ENCODE measurements at regions of chr12 and their contacts with region 1.

Region 1: GRCh38 chr12:25052196-25052913 is 103.5 kb upstream of the BCAT1 start:
- DNase-seq: peak in 8 of 9 donors; percentile 51 to 92 (median 87)
- ATAC-seq: peak; percentile 85
- H3K4me3 ChIP-seq: peak overlapping the region; percentile 94
- H3K4me3 Mint-ChIP-seq: peak overlapping the region; percentile 88 to 100 (median 95)
- H3K27ac ChIP-seq: peak overlapping the region; percentile 76
- H3K27ac Mint-ChIP-seq: peak overlapping the region; percentile 92 to 100 (median 99)
- H3K4me1 ChIP-seq: peaks cover 22 to 25% of the 10 kb centered on the region in 2 donors
- H3K4me1 Mint-ChIP-seq: peaks cover 29 to 50% (median 42%) of the 10 kb centered on the region in 7 donors
- H3K27me3 ChIP-seq: no peaks in the 10 kb centered on the region
- H3K27me3 Mint-ChIP-seq: peaks cover 0 to 3% (median 0%) of the 10 kb centered on the region in 5 donors

Region 2: DNA sequence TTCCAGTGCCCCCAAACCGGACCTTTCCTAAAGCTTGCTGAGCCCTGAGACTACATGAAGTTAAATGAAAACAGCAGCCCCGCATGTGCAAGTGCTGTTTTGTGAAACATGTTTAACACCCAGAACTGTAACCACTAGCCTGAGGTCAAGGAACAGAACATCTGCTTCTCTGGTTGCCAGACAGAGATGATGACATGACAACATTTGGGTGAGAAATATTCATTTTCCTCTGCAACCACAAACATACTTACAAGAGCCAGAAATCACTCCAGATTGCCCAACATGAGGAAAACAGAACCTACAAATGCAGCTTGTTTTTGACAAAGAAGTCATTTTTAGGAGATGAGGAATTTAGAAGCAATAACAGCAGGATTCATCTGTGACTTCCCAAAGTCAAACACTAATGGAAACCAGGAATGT is 213.8 kb before region 1 on chr12:
- CTCF ChIA-PET with region 1: no interaction called
- POLR2A ChIA-PET with region 1: no interaction called
- intact Hi-C with region 1: loop called in 1 of 2 experiments (anchors 2 kb)
- DNase-seq: peak in 1 of 9 donors; percentile 28
- ATAC-seq: peak; percentile 61
- H3K4me3 ChIP-seq: no peak overlapping the region
- H3K4me3 Mint-ChIP-seq: peak overlapping the region in 1 of 10 donors; percentile 61
- H3K27ac ChIP-seq: no peak overlapping the region
- H3K27ac Mint-ChIP-seq: peak overlapping the region in 1 of 9 donors; percentile 46
- H3K4me1 ChIP-seq: no peaks in the 10 kb centered on the region
- H3K4me1 Mint-ChIP-seq: peaks cover 0 to 33% (median 0%) of the 10 kb centered on the region in 7 donors
- H3K27me3 ChIP-seq: no peaks in the 10 kb centered on the region
- H3K27me3 Mint-ChIP-seq: peaks cover 0 to 22% (median 15%) of the 10 kb centered on the region in 5 donors

Region 3: DNA sequence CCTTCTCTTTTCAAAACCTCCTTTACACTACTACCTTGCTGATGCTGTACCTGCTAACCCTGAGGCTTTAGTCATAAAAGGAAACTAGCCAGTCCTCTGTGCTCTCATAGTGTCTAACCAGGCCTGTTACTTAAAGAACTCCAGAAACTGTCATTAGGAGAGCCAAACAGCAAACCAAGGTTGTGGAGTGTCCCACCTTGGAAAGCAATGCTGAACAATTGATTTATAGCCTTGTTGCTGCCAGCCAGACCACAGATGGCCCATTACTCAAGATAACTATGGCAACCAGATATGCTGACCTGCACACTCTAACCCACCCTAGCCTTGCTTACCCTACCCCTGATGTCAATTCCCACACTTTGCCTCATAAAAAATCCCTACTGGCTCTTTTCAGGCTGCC is 76.9 kb before region 1 on chr12:
- CTCF ChIA-PET with region 1: no interaction called
- POLR2A ChIA-PET with region 1: no interaction called
- intact Hi-C with region 1: no loop called
- DNase-seq: no peak
- ATAC-seq: no peak
- H3K4me3 ChIP-seq: no peak overlapping the region
- H3K4me3 Mint-ChIP-seq: no peak overlapping the region
- H3K27ac ChIP-seq: no peak overlapping the region
- H3K27ac Mint-ChIP-seq: no peak overlapping the region
- H3K4me1 ChIP-seq: no peaks in the 10 kb centered on the region
- H3K4me1 Mint-ChIP-seq: peaks cover 0 to 3% (median 0%) of the 10 kb centered on the region in 7 donors
- H3K27me3 ChIP-seq: no peaks in the 10 kb centered on the region
- H3K27me3 Mint-ChIP-seq: peaks cover 2 to 11% (median 9%) of the 10 kb centered on the region in 5 donors

Region 4: GRCh38 chr12:24997970-24998582 is 54.3 kb before region 1 on chr12:
- CTCF ChIA-PET with region 1: no interaction called
- POLR2A ChIA-PET with region 1: interaction called, 5 read pairs
- intact Hi-C with region 1: loop called (anchors 1 to 2 kb)
- DNase-seq: no peak
- ATAC-seq: peak; percentile 54
- H3K4me3 ChIP-seq: no peak overlapping the region
- H3K4me3 Mint-ChIP-seq: no peak overlapping the region
- H3K27ac ChIP-seq: no peak overlapping the region
- H3K27ac Mint-ChIP-seq: peak overlapping the region in 1 of 9 donors; percentile 24
- H3K4me1 ChIP-seq: peaks cover 0 to 11% of the 10 kb centered on the region in 2 donors
- H3K4me1 Mint-ChIP-seq: peaks cover 0 to 16% (median 9%) of the 10 kb centered on the region in 7 donors
- H3K27me3 ChIP-seq: no peaks in the 10 kb centered on the region
- H3K27me3 Mint-ChIP-seq: peaks cover 0 to 18% (median 0%) of the 10 kb centered on the region in 5 donors

Region 5: GRCh38 chr12:25079393-25079792 is 27.0 kb after region 1 on chr12:
- CTCF ChIA-PET with region 1: no interaction called
- POLR2A ChIA-PET with region 1: no interaction called
- intact Hi-C with region 1: loop called in 1 of 2 experiments (anchors 2 kb)
- DNase-seq: no peak
- ATAC-seq: no peak
- H3K4me3 ChIP-seq: no peak overlapping the region
- H3K4me3 Mint-ChIP-seq: no peak overlapping the region
- H3K27ac ChIP-seq: no peak overlapping the region
- H3K27ac Mint-ChIP-seq: no peak overlapping the region
- H3K4me1 ChIP-seq: no peaks in the 10 kb centered on the region
- H3K4me1 Mint-ChIP-seq: peaks cover 0 to 9% (median 7%) of the 10 kb centered on the region in 7 donors
- H3K27me3 ChIP-seq: no peaks in the 10 kb centered on the region
- H3K27me3 Mint-ChIP-seq: no peaks in the 10 kb centered on the region

Region 6: DNA sequence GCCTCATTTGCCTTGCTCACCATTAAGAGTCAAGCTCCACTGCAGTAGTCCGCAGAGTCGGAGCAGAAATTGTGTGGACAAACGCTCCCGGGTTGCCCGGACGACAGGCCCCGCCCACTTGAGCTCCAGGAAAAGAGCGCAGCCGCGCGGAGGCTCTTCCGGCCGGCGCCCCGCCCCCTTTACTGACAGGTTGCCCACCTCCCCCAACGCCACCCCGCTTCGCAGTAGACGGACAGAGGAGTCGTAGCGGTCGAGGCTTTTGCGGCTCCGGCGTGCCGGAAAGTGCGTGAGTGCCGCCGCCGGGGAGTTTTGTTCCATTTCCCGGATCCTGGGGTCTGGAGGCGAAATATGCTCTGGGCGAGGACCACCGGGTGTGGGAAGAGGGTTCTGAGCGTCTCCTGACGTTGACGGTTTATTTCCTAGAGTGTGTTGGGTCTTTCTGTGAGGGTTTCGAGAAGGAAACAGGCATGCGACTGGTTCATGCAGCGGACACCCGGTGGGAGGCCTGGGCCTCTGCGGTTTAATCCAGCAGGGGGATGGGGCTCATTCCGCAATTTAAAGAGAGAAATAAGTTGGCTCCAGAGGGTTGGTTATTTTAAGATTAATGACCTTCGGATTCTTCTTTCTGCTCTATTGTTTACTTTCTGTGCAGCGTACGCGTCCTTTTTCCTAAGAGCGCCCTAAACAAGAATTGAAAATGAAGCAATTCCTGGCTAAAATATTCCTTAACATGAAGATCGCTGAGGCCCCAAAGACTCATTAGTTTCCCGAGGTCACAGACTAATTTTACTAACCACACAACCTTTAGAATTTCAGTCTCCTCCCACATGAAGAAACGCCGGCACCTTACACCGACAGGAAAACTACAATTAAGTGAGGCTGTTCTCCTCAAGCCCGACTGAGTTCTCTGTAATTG is 143.0 kb after region 1 on chr12 and contains the starts of genes DNAI7 and ETFRF1:
- CTCF ChIA-PET with region 1: no interaction called
- POLR2A ChIA-PET with region 1: interaction called, 5 read pairs
- intact Hi-C with region 1: loop called (anchors 1 kb)
- DNase-seq: peak; percentile 93 to 98 (median 96)
- ATAC-seq: peak; percentile 99
- H3K4me3 ChIP-seq: peak within 1 kb of the TSS; percentile 90
- H3K4me3 Mint-ChIP-seq: peak within 1 kb of the TSS; percentile 89 to 100 (median 99)
- H3K27ac ChIP-seq: peak within 1 kb of the TSS; percentile 92
- H3K27ac Mint-ChIP-seq: peak within 1 kb of the TSS; percentile 97 to 100 (median 99)
- H3K4me1 ChIP-seq: peaks cover 7 to 8% of the 10 kb centered on the region in 2 donors
- H3K4me1 Mint-ChIP-seq: peaks cover 14 to 59% (median 47%) of the 10 kb centered on the region in 7 donors
- H3K27me3 ChIP-seq: no peaks in the 10 kb centered on the region
- H3K27me3 Mint-ChIP-seq: peaks cover 0 to 3% (median 0%) of the 10 kb centered on the region in 5 donors
- total RNA-seq, gene DNAI7: 0.34 to 0.72 (median 0.50) TPM in 4 of 5 experiments, not detected in the other
- total RNA-seq, gene ETFRF1: 12.9 to 39.5 (median 34.4) TPM

Region 7: GRCh38 chr12:26832822-26833742 is 1780.7 kb after region 1 on chr12 and contains the start of gene ITPR2:
- CTCF ChIA-PET with region 1: no interaction called
- POLR2A ChIA-PET with region 1: no interaction called
- intact Hi-C with region 1: loop called in 1 of 2 experiments (anchors 5 kb)
- DNase-seq: peak; percentile 81 to 94 (median 89)
- ATAC-seq: peak; percentile 96
- H3K4me3 ChIP-seq: peak within 1 kb of the TSS; percentile 96
- H3K4me3 Mint-ChIP-seq: peak within 1 kb of the TSS; percentile 92 to 100 (median 98)
- H3K27ac ChIP-seq: peak within 1 kb of the TSS; percentile 92
- H3K27ac Mint-ChIP-seq: peak within 1 kb of the TSS; percentile 95 to 99 (median 98)
- H3K4me1 ChIP-seq: peaks cover 12 to 16% of the 10 kb centered on the region in 2 donors
- H3K4me1 Mint-ChIP-seq: peaks cover 26 to 51% (median 45%) of the 10 kb centered on the region in 7 donors
- H3K27me3 ChIP-seq: no peaks in the 10 kb centered on the region
- H3K27me3 Mint-ChIP-seq: no peaks in the 10 kb centered on the region
- total RNA-seq, gene ITPR2: 44.9 to 71.5 (median 59.2) TPM